ENCODE measurements at regions of chr1 and their contacts with region 1.

Region 1: GRCh38 chr1:160416369-160416768 is 16.0 kb downstream of the VANGL2 start:
- DNase-seq: no peak
- H3K4me3 ChIP-seq: no peak overlapping the region
- H3K27ac ChIP-seq: no peak overlapping the region
- H3K4me1 ChIP-seq: peaks cover 1 to 2% (median 2%) of the 10 kb centered on the region in 4 experiments; a peak in 6 of 7 replicates
- H3K27me3 ChIP-seq: no peaks in the 10 kb centered on the region
- CTCF ChIP-seq: peak; percentile 63 to 76 (median 69)
- EP300 ChIP-seq: no peak
- POLR2A ChIP-seq: no peak
- RAD21 ChIP-seq: peak; percentile 81 to 88

Region 2: DNA sequence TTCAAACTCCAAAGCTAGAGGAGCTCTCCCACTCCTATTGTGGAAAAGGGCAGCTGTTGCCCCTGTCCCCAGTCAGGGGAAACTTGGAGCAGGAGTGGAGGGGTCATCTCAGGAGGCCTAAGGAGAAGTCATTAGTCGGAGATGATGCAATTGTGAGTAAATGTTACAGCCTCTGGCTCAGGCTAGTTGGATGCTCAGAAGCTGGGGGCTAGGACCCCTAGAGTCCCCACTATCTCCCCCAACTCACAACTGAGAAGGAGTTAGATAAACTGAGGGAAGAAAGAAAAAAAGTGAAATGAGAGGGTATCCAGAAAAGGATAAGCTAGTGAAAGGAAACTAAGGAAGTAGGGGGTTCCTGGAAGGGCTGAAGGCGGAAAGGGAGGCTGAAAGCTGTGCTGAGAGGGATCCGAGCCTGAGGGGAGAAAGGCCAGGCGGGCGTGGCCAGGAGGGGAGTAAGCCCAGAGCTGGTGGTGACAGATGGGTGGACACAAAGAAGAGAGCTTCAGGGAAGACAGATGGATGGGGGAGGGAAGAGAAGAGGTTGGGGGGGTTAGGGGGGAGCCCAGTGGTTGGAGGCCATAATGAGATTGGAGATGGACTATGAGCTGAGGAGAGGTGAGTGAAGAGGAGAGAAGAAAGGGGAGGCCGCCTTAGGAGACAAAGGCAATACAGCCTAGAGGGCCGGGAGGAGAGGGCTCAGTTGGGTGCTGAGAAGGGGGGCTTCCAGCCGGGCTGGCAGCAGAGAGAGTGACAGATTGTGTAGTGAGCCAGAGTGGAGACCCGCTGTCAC is 54.0 kb before region 1 on chr1:
- CTCF ChIA-PET with region 1: interaction called, 70 read pairs
- POLR2A ChIA-PET with region 1: interaction called, 3 read pairs
- DNase-seq: no peak
- H3K4me3 ChIP-seq: no peak overlapping the region
- H3K27ac ChIP-seq: peak overlapping the region; percentile 8; the same call in 1 of the 2 replicates
- H3K4me1 ChIP-seq: peaks cover 3 to 8% (median 4%) of the 10 kb centered on the region in 4 experiments; a peak in 6 of 7 replicates
- H3K27me3 ChIP-seq: no peaks in the 10 kb centered on the region
- CTCF ChIP-seq: no peak
- EP300 ChIP-seq: no peak
- POLR2A ChIP-seq: no peak
- RAD21 ChIP-seq: no peak

Region 3: DNA sequence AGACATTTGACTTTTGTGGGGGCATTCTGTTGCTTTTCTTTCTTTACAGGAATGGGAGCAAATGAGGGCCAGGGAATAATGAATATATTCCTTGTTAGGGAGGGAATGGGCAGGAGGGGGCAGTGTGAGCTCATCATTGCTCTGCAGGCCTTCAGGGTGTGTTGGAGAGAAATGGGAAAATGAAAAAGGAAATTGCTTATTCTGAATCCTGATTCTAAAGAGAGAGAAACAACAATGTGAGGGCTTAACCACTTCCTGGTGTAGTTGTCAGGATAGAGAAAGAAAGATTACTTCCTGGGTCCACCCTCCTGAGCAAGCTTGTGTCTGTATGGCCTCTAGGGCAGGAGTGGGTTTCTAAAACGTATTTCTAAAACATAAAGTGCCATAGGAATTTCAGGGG is 12.3 kb after region 1 on chr1:
- CTCF ChIA-PET with region 1: interaction called, 10 read pairs
- POLR2A ChIA-PET with region 1: interaction called, 3 read pairs
- DNase-seq: no peak
- H3K4me3 ChIP-seq: no peak overlapping the region
- H3K27ac ChIP-seq: no peak overlapping the region
- H3K4me1 ChIP-seq: no peaks in the 10 kb centered on the region
- H3K27me3 ChIP-seq: no peaks in the 10 kb centered on the region
- CTCF ChIP-seq: peak; percentile 47 to 76 (median 57)
- EP300 ChIP-seq: no peak
- POLR2A ChIP-seq: no peak
- RAD21 ChIP-seq: peak; percentile 85 to 88

Region 4: GRCh38 chr1:160491017-160491416 is 74.6 kb after region 1 on chr1:
- CTCF ChIA-PET with region 1: no interaction called
- POLR2A ChIA-PET with region 1: no interaction called
- DNase-seq: no peak
- H3K4me3 ChIP-seq: no peak overlapping the region
- H3K27ac ChIP-seq: no peak overlapping the region
- H3K4me1 ChIP-seq: peaks cover 0 to 3% (median 1%) of the 10 kb centered on the region in 4 experiments; a peak in 2 of 7 replicates
- H3K27me3 ChIP-seq: no peaks in the 10 kb centered on the region
- CTCF ChIP-seq: no peak
- EP300 ChIP-seq: no peak
- POLR2A ChIP-seq: no peak
- RAD21 ChIP-seq: no peak